CD8-positive, alpha-beta T cell (primary cell): ENCODE measurements at regions of chr12 and their contacts with region 1.

Region 1: DNA sequence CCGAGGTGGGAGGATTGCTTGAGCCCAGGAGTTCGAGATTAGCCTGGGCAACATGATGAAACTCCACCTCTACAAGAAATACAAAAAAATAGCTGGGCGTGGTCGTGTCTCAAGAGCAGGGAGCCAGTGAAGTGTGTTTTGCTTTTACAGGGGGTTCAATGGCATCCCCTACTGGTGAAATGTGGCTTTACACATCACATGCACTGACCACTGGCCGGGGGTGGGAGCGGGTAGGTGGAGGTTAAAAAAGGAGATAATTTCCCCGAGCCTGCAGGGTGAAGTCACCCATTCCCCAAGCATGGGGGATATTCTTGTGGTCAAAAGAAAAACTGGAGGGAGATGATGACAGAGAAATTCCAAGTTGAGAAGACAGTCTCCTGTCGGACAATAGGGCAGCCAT is 63.6 kb upstream of the PWP1 start:
- DNase-seq: peak in 1 of 9 experiments; percentile 20
- ATAC-seq: no peak
- H3K4me3 ChIP-seq: no peak overlapping the region
- H3K4me3 Mint-ChIP-seq: no peak overlapping the region
- H3K27ac ChIP-seq: no peak overlapping the region
- H3K27ac Mint-ChIP-seq: no peak overlapping the region
- H3K4me1 ChIP-seq: no peaks in the 10 kb centered on the region
- H3K4me1 Mint-ChIP-seq: no peaks in the 10 kb centered on the region
- H3K27me3 ChIP-seq: no peaks in the 10 kb centered on the region
- H3K27me3 Mint-ChIP-seq: no peaks in the 10 kb centered on the region
- CTCF ChIP-seq: no peak

Region 2: DNA sequence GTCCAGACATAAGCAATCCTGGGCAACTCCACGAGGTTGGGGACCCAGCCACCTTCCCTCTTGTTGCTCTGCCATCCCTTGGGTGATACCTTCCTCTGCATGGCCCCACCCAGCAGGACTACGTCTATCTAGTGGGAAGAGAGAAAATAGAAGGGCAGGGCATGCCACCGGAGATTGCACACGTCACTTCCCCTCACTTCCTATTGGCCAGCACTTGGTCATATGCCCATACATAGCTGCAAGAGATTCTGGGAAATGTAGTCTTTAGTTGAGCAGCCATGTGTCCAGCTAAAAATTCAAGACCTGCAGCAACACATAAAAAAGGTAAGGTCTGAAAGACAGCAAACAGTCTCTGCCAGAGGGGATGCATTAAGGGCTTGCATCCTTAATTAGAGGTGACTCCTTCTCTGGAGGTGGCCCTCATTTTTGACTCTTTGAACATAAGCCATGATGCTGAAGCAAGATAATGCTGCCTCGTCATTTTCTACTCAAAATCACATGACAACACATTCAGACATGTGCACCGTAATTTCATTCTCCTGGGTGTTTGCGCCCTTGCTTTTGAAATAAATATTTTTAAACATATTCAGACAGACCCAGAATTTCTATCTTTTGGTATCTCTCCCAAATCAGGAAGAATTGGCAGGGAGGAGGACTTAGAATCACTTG is 28.2 kb before region 1 on chr12:
- CTCF ChIA-PET with region 1: no interaction called
- POLR2A ChIA-PET with region 1: no interaction called
- intact Hi-C with region 1: no loop called
- DNase-seq: no peak
- ATAC-seq: no peak
- H3K4me3 ChIP-seq: no peak overlapping the region
- H3K4me3 Mint-ChIP-seq: no peak overlapping the region
- H3K27ac ChIP-seq: no peak overlapping the region
- H3K27ac Mint-ChIP-seq: no peak overlapping the region
- H3K4me1 ChIP-seq: no peaks in the 10 kb centered on the region
- H3K4me1 Mint-ChIP-seq: no peaks in the 10 kb centered on the region
- H3K27me3 ChIP-seq: no peaks in the 10 kb centered on the region
- H3K27me3 Mint-ChIP-seq: no peaks in the 10 kb centered on the region
- CTCF ChIP-seq: no peak

Region 3: DNA sequence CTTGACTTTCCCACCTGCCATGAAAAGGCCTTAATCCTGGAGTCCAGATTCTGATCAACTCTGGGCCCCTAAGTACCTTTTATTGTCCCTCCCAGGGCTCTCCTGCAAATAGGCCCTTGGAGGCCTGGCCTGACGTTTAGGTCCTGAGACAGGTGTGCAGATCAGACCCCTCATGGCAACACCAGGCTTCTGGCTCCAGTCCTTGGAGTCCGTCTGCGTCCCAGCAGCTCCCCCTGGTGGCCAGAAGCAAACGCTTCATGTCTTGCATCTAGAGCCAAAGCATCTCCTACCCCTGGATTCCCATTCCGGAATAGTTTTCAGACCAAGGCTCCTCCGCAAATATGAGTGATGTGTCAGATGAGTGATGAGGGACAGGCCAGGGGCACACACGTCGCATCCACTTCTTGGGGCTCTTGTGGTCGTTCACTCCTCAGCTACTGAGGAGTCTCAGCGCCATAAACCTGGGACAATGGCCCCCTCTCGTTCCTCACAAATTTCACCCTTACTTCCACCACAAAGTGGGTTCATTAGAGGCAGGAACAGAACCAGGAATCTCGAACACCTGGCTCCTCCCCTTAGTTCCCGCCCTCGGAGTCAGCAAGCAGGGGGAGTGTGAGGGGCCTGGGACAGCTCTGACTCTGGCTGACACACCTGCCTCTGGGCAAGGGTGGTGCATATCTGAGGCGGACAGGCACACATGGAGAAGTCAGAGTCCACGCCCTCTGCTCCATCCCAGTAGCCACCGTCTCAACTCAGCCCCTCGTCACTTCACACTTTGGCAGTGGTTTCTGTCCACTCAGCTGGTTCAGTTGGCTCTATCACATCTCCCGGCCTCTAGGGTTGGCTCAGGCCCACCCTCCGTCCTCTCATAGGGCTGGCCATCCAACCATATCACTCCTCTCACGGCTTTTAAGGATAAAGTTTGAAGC is 14.3 kb before region 1 on chr12:
- CTCF ChIA-PET with region 1: interaction called, 51 read pairs
- POLR2A ChIA-PET with region 1: no interaction called
- intact Hi-C with region 1: no loop called
- DNase-seq: peak; percentile 57 to 89 (median 83)
- ATAC-seq: peak; percentile 84
- H3K4me3 ChIP-seq: no peak overlapping the region
- H3K4me3 Mint-ChIP-seq: no peak overlapping the region
- H3K27ac ChIP-seq: no peak overlapping the region
- H3K27ac Mint-ChIP-seq: no peak overlapping the region
- H3K4me1 ChIP-seq: no peaks in the 10 kb centered on the region
- H3K4me1 Mint-ChIP-seq: no peaks in the 10 kb centered on the region
- H3K27me3 ChIP-seq: no peaks in the 10 kb centered on the region
- H3K27me3 Mint-ChIP-seq: no peaks in the 10 kb centered on the region
- CTCF ChIP-seq: peak; percentile 94

Region 4: GRCh38 chr12:107635139-107635538 is 13.1 kb after region 1 on chr12:
- CTCF ChIA-PET with region 1: no interaction called
- POLR2A ChIA-PET with region 1: no interaction called
- intact Hi-C with region 1: no loop called
- DNase-seq: no peak
- ATAC-seq: no peak
- H3K4me3 ChIP-seq: no peak overlapping the region
- H3K4me3 Mint-ChIP-seq: no peak overlapping the region
- H3K27ac ChIP-seq: no peak overlapping the region
- H3K27ac Mint-ChIP-seq: no peak overlapping the region
- H3K4me1 ChIP-seq: no peaks in the 10 kb centered on the region
- H3K4me1 Mint-ChIP-seq: no peaks in the 10 kb centered on the region
- H3K27me3 ChIP-seq: no peaks in the 10 kb centered on the region
- H3K27me3 Mint-ChIP-seq: no peaks in the 10 kb centered on the region
- CTCF ChIP-seq: no peak